Sigmoid colon (tissue), 7 donors: ENCODE measurements at regions of chr17 and their contacts with region 1.

Region 1: GRCh38 chr17:50547035-50547735 is at the start of gene SPATA20:
- DNase-seq: peak; percentile 97
- H3K4me3 ChIP-seq: peak within 1 kb of the TSS; percentile 39 to 75 (median 64)
- H3K27ac ChIP-seq: peak within 1 kb of the TSS; percentile 82 to 88 (median 84)
- H3K4me1 ChIP-seq: peaks cover 0 to 35% (median 23%) of the 10 kb centered on the region in 4 donors
- H3K27me3 ChIP-seq: no peaks in the 10 kb centered on the region
- CTCF ChIP-seq: peak; percentile 96 to 99 (median 98)
- EP300 ChIP-seq: no peak
- POLR2A ChIP-seq: peak; percentile 11 to 27
- total RNA-seq, gene SPATA20: 40.8 to 81.7 (median 58.6) TPM

Region 2: DNA sequence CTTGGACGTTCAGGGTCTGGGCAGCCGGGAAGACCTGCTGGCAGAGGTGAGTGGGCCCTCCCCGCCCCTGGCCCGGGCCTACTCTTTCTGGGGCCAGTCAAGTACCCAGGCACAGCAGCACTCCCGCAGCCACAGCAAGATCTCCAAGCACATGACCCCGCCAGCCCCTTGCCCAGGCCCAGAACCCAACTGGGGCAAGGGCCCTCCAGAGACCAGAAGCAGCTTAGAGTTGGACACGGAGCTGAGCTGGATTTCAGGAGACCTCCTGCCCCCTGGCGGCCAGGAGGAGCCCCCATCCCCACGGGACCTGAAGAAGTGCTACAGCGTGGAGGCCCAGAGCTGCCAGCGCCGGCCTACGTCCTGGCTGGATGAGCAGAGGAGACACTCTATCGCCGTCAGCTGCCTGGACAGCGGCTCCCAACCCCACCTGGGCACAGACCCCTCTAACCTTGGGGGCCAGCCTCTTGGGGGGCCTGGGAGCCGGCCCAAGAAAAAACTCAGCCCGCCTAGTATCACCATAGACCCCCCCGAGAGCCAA is 78.9 kb after region 1 on chr17:
- intact Hi-C with region 1: loop called (anchors 1 kb)
- DNase-seq: peak; percentile 90
- H3K4me3 ChIP-seq: no peak overlapping the region
- H3K27ac ChIP-seq: no peak overlapping the region
- H3K4me1 ChIP-seq: peaks cover 0 to 8% (median 4%) of the 10 kb centered on the region in 4 donors
- H3K27me3 ChIP-seq: peaks cover 0 to 43% (median 10%) of the 10 kb centered on the region in 3 donors
- CTCF ChIP-seq: peak; percentile 34 to 61 (median 54)
- EP300 ChIP-seq: no peak
- POLR2A ChIP-seq: no peak

Region 3: DNA sequence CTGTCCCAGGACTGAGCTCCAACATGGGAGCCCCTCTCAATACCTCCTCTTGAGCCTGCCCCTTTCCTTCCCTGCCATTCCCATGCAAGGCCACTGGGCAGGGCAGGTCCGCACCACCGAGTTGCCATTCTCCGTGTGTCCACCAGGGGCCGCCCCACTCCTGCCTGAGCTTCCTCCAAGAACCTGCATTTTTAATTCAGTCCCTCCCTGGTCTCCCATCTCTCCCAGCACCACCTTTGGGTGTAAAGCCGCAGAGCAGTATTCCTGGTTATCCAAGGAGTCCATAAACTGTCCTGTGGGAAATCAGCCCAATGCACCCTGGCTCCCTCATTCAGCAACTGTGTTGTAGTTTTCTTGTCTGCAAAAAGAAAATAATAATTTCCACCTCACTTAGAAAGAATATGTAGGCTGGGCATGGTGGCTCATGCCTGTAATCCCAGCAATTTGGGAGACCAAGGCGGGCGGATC is 236.0 kb after region 1 on chr17:
- intact Hi-C with region 1: loop called (anchors 10 kb)
- DNase-seq: peak; percentile 91
- H3K4me3 ChIP-seq: no peak overlapping the region
- H3K27ac ChIP-seq: no peak overlapping the region
- H3K4me1 ChIP-seq: peaks cover 0 to 22% (median 17%) of the 10 kb centered on the region in 4 donors
- H3K27me3 ChIP-seq: peaks cover 0 to 3% (median 0%) of the 10 kb centered on the region in 3 donors
- CTCF ChIP-seq: peak; percentile 98 to 100 (median 100)
- EP300 ChIP-seq: no peak
- POLR2A ChIP-seq: no peak

Region 4: DNA sequence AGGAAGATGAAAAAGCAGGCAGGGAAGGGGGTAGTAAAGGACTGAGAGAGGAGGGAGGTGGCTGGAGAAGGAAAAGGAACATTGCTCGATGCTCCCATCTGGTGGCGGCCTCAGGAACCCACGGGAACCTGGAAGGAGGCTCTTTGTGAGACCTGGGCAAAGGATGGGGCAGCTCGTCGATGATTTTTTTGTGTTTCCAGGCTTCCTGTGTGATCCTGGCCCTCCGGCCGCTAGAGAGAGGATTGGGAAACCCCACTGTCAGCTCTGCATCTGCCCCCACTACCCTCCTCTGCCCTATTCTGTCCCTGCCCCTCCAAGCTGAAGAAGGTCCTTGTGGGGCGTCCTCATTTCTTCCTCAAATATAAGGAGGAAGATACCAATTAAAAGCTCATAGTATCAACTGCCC is 294.8 kb after region 1 on chr17:
- intact Hi-C with region 1: loop called (anchors 1 kb)
- DNase-seq: no peak
- H3K4me3 ChIP-seq: no peak overlapping the region
- H3K27ac ChIP-seq: no peak overlapping the region
- H3K4me1 ChIP-seq: peaks cover 0 to 3% (median 0%) of the 10 kb centered on the region in 4 donors
- H3K27me3 ChIP-seq: no peaks in the 10 kb centered on the region
- CTCF ChIP-seq: peak; percentile 83 to 86 (median 84)
- EP300 ChIP-seq: no peak
- POLR2A ChIP-seq: no peak

Region 5: GRCh38 chr17:50949989-50950881 is 403.1 kb after region 1 on chr17:
- intact Hi-C with region 1: loop called (anchors 10 kb)
- DNase-seq: peak; percentile 91
- H3K4me3 ChIP-seq: peak overlapping the region in 1 of 4 donors; percentile 14
- H3K27ac ChIP-seq: peak overlapping the region; percentile 82 to 92 (median 84)
- H3K4me1 ChIP-seq: peaks cover 0 to 51% (median 41%) of the 10 kb centered on the region in 4 donors
- H3K27me3 ChIP-seq: no peaks in the 10 kb centered on the region
- CTCF ChIP-seq: peak; percentile 76 to 95 (median 94)
- EP300 ChIP-seq: peak in 2 of 4 donors; percentile 60 to 85
- POLR2A ChIP-seq: peak in 1 of 2 donors; percentile 31

Region 6: GRCh38 chr17:51153210-51154072 is 606.3 kb after region 1 on chr17 and contains the start of gene NME1:
- intact Hi-C with region 1: loop called (anchors 10 kb)
- DNase-seq: peak; percentile 98
- H3K4me3 ChIP-seq: peak within 1 kb of the TSS; percentile 52 to 66 (median 57)
- H3K27ac ChIP-seq: peak within 1 kb of the TSS; percentile 88 to 94 (median 88)
- H3K4me1 ChIP-seq: peaks cover 0 to 22% (median 18%) of the 10 kb centered on the region in 4 donors
- H3K27me3 ChIP-seq: no peaks in the 10 kb centered on the region
- CTCF ChIP-seq: peak; percentile 65 to 70 (median 66)
- EP300 ChIP-seq: peak in 2 of 4 donors; percentile 16 to 33
- POLR2A ChIP-seq: no peak
- total RNA-seq, gene NME1: 12.5 to 37.7 (median 17.4) TPM